Aorta (tissue), 5 donors: ENCODE measurements at regions of chr22 and their contacts with region 1.

Region 1: DNA sequence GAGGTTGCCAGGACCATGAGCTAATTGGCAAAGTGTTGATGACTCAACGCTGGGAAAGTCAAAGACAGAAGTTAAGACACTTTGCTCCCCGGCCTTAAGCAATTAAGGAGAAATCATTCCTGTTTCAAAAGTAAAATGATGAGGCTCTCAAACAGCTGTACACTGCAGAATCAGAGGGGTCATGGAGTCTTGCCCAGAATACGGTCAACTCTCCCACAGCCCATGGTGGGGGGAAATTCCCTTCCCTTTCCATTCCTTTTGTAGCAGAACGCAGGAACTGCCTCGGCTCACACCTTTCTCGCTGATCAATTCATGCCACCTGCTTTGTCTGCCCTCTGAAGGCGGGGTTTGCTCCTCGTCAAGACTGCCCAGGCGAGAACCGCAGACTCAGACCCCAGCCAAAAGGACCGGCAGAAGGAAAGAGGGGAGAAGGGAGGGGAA is 52.8 kb downstream of the MN1 start:
- DNase-seq: peak in 1 of 2 donors; percentile 59
- ATAC-seq: peak; percentile 57
- H3K4me3 ChIP-seq: no peak overlapping the region
- H3K27ac ChIP-seq: peak overlapping the region; percentile 12 to 80
- H3K4me1 ChIP-seq: peaks cover 0 to 4% of the 10 kb centered on the region in 2 donors
- H3K27me3 ChIP-seq: no peaks in the 10 kb centered on the region

Region 2: GRCh38 chr22:27531782-27532530 is 216.8 kb before region 1 on chr22:
- intact Hi-C with region 1: no loop called
- DNase-seq: no peak
- ATAC-seq: peak; percentile 58
- H3K4me3 ChIP-seq: no peak overlapping the region
- H3K27ac ChIP-seq: no peak overlapping the region
- H3K4me1 ChIP-seq: no peaks in the 10 kb centered on the region
- H3K27me3 ChIP-seq: no peaks in the 10 kb centered on the region

Region 3: GRCh38 chr22:27668828-27669797 is 79.7 kb before region 1 on chr22:
- intact Hi-C with region 1: loop called in 1 of 2 experiments (anchors 5 kb)
- DNase-seq: no peak
- ATAC-seq: no peak
- H3K4me3 ChIP-seq: no peak overlapping the region
- H3K27ac ChIP-seq: no peak overlapping the region
- H3K4me1 ChIP-seq: peaks cover 0 to 4% of the 10 kb centered on the region in 2 donors
- H3K27me3 ChIP-seq: no peaks in the 10 kb centered on the region

Region 4: GRCh38 chr22:27686534-27686933 is 62.2 kb before region 1 on chr22:
- intact Hi-C with region 1: loop called in 1 of 2 experiments (anchors 5 kb)
- DNase-seq: peak; percentile 91 to 93
- ATAC-seq: peak; percentile 93
- H3K4me3 ChIP-seq: no peak overlapping the region
- H3K27ac ChIP-seq: peak overlapping the region; percentile 31 to 84
- H3K4me1 ChIP-seq: no peaks in the 10 kb centered on the region
- H3K27me3 ChIP-seq: no peaks in the 10 kb centered on the region

Region 5: GRCh38 chr22:27786291-27786932 is 37.6 kb after region 1 on chr22:
- intact Hi-C with region 1: loop called in 1 of 2 experiments (anchors 5 kb)
- DNase-seq: no peak
- ATAC-seq: peak; percentile 31
- H3K4me3 ChIP-seq: no peak overlapping the region
- H3K27ac ChIP-seq: peak overlapping the region; percentile 87 to 95
- H3K4me1 ChIP-seq: peaks cover 0 to 5% of the 10 kb centered on the region in 2 donors
- H3K27me3 ChIP-seq: no peaks in the 10 kb centered on the region

Region 6: GRCh38 chr22:27799334-27800249 is 50.8 kb after region 1 on chr22:
- intact Hi-C with region 1: loop called in 1 of 2 experiments (anchors 5 kb)
- DNase-seq: peak; percentile 62 to 86
- ATAC-seq: peak; percentile 23
- H3K4me3 ChIP-seq: peak overlapping the region; percentile 90
- H3K27ac ChIP-seq: peak overlapping the region in 1 of 2 donors; percentile 56
- H3K4me1 ChIP-seq: no peaks in the 10 kb centered on the region
- H3K27me3 ChIP-seq: no peaks in the 10 kb centered on the region